GM12878 (cell line): ENCODE measurements at regions of chr3 and their contacts with region 1.

Region 1: DNA sequence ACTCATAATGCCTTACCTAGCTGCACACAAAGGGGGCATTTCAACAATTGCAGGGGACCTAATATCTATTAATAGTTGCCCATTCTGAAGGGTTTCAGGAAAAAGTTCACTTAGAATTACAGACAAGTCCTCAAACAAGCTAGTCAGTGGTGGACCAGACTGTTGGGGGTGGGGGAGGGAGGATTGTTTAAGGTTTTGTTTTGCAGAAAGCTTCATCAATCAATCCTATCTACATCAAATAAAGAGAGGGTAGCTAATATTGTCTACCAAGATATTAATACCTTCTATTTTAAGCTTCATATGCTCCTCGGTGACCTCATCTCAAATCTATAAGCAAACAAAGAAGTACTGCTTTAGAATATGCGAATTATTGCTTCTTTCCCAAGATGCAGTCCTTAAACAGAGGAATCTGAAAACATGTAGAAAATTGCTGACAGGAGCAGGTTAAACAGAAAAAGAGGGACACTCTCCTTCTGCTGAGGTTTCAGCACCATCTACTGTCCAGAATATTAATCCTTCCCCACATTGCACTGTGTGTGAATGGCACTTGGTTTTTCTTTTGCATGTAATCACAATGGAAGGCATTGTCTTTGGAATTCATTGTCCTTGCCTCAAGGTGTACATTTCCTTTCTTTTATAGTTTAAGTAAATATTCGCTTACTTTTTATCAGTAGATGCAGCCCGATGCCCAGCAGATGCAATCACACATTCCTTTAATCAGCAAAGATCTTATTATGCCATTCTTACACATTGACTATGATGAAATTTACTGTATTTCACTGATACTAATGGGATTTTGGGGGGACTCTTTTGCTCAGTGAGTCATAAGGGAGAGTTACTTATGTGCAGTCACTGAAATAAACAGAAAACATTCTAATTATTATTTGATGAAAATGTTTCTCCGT is 94.7 kb downstream of the IL5RA start:
- DNase-seq: no peak
- ATAC-seq: peak; percentile 78
- H3K4me3 ChIP-seq: no peak overlapping the region
- H3K27ac ChIP-seq: no peak overlapping the region
- H3K4me1 ChIP-seq: no peaks in the 10 kb centered on the region
- H3K27me3 ChIP-seq: no peaks in the 10 kb centered on the region
- CTCF ChIP-seq: peak; percentile 44 to 72 (median 59); a peak in 5 of 6 replicates
- EP300 ChIP-seq: no peak
- POLR2A ChIP-seq: no peak
- RAD21 ChIP-seq: peak; percentile 92

Region 2: GRCh38 chr3:1082108-1082507 is 1933.3 kb before region 1 on chr3:
- CTCF ChIA-PET with region 1: no interaction called
- POLR2A ChIA-PET with region 1: no interaction called
- RAD21 ChIA-PET with region 1: no interaction called
- SMC1A ChIA-PET with region 1: no interaction called
- in situ Hi-C with region 1: loop called (anchors 25 kb)
- intact Hi-C with region 1: no loop called
- DNase-seq: no peak
- ATAC-seq: peak; percentile 86
- H3K4me3 ChIP-seq: no peak overlapping the region
- H3K27ac ChIP-seq: no peak overlapping the region
- H3K4me1 ChIP-seq: no peaks in the 10 kb centered on the region
- H3K27me3 ChIP-seq: no peaks in the 10 kb centered on the region
- CTCF ChIP-seq: peak; percentile 42 to 72 (median 64); a peak in 5 of 6 replicates
- EP300 ChIP-seq: no peak
- POLR2A ChIP-seq: no peak
- RAD21 ChIP-seq: peak; percentile 67

Region 3: DNA sequence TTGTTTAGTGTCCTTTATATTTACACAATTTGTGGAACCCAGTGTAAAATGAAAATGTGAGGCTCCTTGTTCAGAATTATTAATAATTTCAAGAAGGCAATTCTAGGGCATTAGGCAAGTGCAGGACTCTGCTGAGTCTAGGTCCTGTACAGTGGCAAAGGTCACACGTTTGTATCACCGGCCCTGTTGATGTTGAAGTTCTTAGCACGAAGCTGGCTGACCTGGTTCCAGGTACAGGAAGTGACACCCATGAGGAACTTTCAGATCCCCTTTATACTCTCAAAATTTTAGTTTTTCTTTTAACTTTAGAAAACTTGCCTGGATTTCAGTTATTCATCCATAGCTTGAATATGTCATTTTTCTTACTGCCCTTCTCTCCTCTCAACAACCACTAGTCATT is 1573.2 kb before region 1 on chr3:
- CTCF ChIA-PET with region 1: no interaction called
- POLR2A ChIA-PET with region 1: no interaction called
- RAD21 ChIA-PET with region 1: no interaction called
- SMC1A ChIA-PET with region 1: no interaction called
- in situ Hi-C with region 1: no loop called
- intact Hi-C with region 1: loop called (anchors 10 kb)
- DNase-seq: no peak
- ATAC-seq: peak; percentile 69
- H3K4me3 ChIP-seq: no peak overlapping the region
- H3K27ac ChIP-seq: no peak overlapping the region
- H3K4me1 ChIP-seq: no peaks in the 10 kb centered on the region
- H3K27me3 ChIP-seq: no peaks in the 10 kb centered on the region
- CTCF ChIP-seq: no peak
- EP300 ChIP-seq: no peak
- POLR2A ChIP-seq: no peak
- RAD21 ChIP-seq: no peak

Region 4: DNA sequence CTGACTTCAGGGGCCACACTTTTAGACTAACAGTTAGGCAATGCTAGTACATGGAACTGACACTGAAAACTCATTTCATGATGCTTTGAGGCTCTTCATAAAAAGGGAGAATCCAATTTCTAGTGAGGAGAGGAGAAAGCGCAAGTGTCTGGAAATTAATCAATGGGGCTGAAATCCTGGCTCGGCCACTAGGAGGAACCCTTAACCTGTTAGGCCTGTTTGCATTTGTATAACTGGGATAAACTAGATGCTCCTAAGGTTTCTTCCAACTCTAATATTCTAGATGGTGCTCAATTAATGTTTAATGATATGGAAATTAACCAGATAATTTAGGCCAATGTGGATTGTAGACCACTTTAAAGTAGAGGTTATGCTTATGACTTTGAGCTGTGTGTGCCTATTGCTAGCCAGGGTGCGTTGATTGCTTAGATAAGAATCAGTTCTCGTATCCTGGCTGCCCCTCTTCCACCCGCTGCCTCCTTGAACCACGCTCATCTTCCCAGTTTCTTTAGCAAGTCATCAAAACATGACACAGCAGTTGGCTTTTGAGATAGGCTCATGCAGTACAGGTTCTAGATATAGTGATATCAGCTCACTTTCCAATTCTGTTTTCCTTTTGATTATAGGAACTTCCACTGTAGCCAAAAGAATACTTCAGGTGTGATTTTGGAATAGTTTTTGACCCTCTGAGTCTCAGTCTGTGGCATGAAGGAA is 180.9 kb after region 1 on chr3:
- CTCF ChIA-PET with region 1: no interaction called
- POLR2A ChIA-PET with region 1: no interaction called
- RAD21 ChIA-PET with region 1: no interaction called
- SMC1A ChIA-PET with region 1: no interaction called
- in situ Hi-C with region 1: no loop called
- intact Hi-C with region 1: no loop called
- DNase-seq: no peak
- ATAC-seq: peak; percentile 58; the same call in 2 of the 3 replicates
- H3K4me3 ChIP-seq: no peak overlapping the region
- H3K27ac ChIP-seq: no peak overlapping the region
- H3K4me1 ChIP-seq: peaks cover 2% of the 10 kb centered on the region; the same call in 1 of the 2 replicates
- H3K27me3 ChIP-seq: no peaks in the 10 kb centered on the region; a peak in 1 of 4 replicates
- CTCF ChIP-seq: peak; percentile 57 to 60 (median 57)
- EP300 ChIP-seq: no peak
- POLR2A ChIP-seq: no peak
- RAD21 ChIP-seq: peak; percentile 57